ENCODE measurements at regions of chr5 and their contacts with region 1.

Region 1: GRCh38 chr5:59390074-59390659 is 503.4 kb downstream of the PDE4D start:
- DNase-seq: no peak
- CTCF ChIP-seq: peak; percentile 46

Region 2: DNA sequence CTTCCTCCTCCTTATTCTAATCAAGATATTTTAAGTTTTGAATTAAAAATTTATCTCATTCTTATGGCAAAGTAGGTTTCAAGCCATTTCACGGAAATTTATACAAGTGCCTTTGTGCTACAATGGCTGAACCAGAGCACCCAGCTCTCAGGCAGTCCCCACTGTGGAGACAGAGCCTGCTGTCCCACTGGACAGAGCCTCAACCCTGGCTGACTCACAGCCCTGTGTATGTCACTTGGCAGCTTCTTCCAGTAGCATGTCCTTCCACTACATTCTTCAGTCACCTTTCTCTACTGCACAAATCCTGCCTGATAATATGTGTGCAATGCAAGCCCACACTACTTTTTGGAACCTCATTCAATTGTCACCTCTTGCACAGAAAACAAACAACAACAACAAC is 250.2 kb after region 1 on chr5:
- CTCF ChIA-PET with region 1: no interaction called
- POLR2A ChIA-PET with region 1: no interaction called
- DNase-seq: no peak
- CTCF ChIP-seq: no peak

Region 3: GRCh38 chr5:59799668-59800346 is 409.6 kb after region 1 on chr5:
- CTCF ChIA-PET with region 1: interaction called, 22 read pairs
- POLR2A ChIA-PET with region 1: no interaction called
- DNase-seq: peak; percentile 21
- CTCF ChIP-seq: peak; percentile 60

Measured in GM10248 (cell line).